Activated T-helper 1 cell treated with anti-CD3 and anti-CD28 coated beads, Interleukin-12 subunit alpha, Interleukin-12 subunit beta, Interleukin-2, Interleukin-4 antibody, amounts not matched to agents 30 ng/mL and 10 ng/mL and 1 ng/mL, durations not matched to agents 14 hours and 24 hours and 36 hours (primary cell): ENCODE measurements at regions of chr11 and their contacts with region 1.

Region 1: GRCh38 chr11:72483412-72484186 is 49.3 kb upstream of the CLPB start:
- DNase-seq: peak; percentile 32
- H3K4me3 Mint-ChIP-seq: no peak overlapping the region
- H3K27ac Mint-ChIP-seq: peak overlapping the region; percentile 15
- H3K4me1 Mint-ChIP-seq: peaks cover 9% of the 10 kb centered on the region
- H3K27me3 Mint-ChIP-seq: peaks cover 8% of the 10 kb centered on the region

Region 2: DNA sequence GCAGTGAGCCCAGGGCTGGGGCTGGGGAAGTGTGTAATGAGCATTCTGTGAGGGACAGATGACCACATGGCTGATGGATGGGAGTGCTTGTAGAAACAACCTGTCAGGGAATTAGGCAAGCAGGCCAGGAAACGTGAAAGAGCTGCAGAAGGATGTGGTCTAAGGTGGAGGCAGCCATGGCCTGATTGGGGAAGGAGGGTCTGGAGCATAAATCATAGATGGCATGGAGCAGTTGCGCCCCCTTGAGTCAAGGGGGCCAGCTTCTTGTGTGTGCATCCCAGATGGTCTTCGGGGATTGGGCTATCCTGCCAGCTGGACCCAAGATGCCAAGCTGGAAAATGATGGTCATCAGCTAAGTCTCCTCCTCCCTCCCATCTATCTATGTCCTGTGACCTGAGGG is 70.1 kb after region 1 on chr11:
- intact Hi-C with region 1: loop called (anchors 1 kb)
- DNase-seq: no peak
- H3K4me3 Mint-ChIP-seq: no peak overlapping the region
- H3K27ac Mint-ChIP-seq: no peak overlapping the region
- H3K4me1 Mint-ChIP-seq: no peaks in the 10 kb centered on the region
- H3K27me3 Mint-ChIP-seq: peaks cover 37% of the 10 kb centered on the region

Region 3: GRCh38 chr11:72585762-72586311 is 102.2 kb after region 1 on chr11:
- intact Hi-C with region 1: loop called (anchors 1 kb)
- DNase-seq: peak; percentile 63
- H3K4me3 Mint-ChIP-seq: peak overlapping the region; percentile 48
- H3K27ac Mint-ChIP-seq: no peak overlapping the region
- H3K4me1 Mint-ChIP-seq: peaks cover 29% of the 10 kb centered on the region
- H3K27me3 Mint-ChIP-seq: peaks cover 40% of the 10 kb centered on the region

Region 4: GRCh38 chr11:72598906-72599305 is 115.3 kb after region 1 on chr11:
- intact Hi-C with region 1: no loop called
- DNase-seq: no peak
- H3K4me3 Mint-ChIP-seq: no peak overlapping the region
- H3K27ac Mint-ChIP-seq: no peak overlapping the region
- H3K4me1 Mint-ChIP-seq: no peaks in the 10 kb centered on the region
- H3K27me3 Mint-ChIP-seq: peaks cover 28% of the 10 kb centered on the region

Region 5: GRCh38 chr11:72668611-72669347 is 185.2 kb after region 1 on chr11:
- intact Hi-C with region 1: loop called (anchors 2 kb)
- DNase-seq: peak; percentile 43
- H3K4me3 Mint-ChIP-seq: peak overlapping the region; percentile 52
- H3K27ac Mint-ChIP-seq: peak overlapping the region; percentile 71
- H3K4me1 Mint-ChIP-seq: peaks cover 15% of the 10 kb centered on the region
- H3K27me3 Mint-ChIP-seq: peaks cover 33% of the 10 kb centered on the region

Region 6: DNA sequence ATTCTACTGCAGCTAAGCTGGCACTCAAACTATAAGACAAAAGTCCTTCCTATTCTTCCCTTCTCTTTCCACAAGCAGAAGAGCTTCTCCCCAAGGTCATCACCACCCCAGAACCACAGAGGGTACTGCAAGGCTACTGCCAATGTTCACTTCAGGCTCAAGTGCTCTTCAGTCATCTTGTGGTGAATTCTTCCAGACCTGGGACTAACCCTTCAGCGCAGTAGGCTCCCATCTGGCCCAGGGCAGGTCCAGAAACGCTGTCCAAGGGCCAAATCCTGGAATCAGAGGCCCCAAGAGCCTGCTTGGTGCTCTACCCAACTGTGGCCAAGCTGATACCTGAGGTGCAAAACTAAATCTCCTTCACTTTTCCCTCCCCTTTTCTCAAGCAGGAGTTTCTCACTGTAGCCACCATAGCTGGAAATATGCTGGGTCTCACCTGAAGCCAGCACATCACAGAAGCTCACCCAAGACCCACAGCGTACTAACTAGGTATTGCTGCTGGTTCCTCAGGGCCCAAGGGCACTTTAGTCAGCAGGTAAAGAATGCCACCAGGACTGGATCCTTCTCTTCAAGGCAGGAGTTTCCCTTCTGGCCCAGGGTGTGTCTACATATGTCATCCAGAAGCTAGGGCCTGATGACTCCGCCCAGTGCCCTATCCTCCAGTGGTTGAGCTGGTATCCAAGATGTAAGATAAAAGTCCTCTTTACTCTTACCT is 630.7 kb after region 1 on chr11:
- intact Hi-C with region 1: no loop called
- DNase-seq: no peak
- H3K4me3 Mint-ChIP-seq: no peak overlapping the region
- H3K27ac Mint-ChIP-seq: no peak overlapping the region
- H3K4me1 Mint-ChIP-seq: peaks cover 6% of the 10 kb centered on the region
- H3K27me3 Mint-ChIP-seq: no peaks in the 10 kb centered on the region